ENCODE measurements at regions of chr5 and their contacts with region 1.

Region 1: DNA sequence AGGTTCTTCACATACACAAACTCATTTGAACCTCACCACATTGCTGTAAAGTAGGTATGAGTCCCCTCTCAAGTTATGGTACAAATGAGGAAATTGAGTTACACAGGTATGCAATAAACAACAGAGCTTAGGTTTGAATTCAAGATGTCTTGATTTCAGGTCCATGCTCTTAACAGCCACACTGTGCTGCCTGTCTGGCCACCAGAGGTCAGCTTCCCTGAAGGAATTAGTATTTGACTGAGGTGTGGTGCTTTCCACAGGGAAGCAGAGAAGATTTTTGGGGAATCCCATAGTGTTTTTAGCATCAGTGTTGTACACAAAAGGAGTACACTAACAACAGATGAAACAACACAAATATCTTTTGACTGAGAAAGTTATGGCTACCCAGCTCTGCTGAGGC is 94.4 kb upstream of the ITGA1 start:
- DNase-seq: peak; percentile 66
- H3K4me3 ChIP-seq: no peak overlapping the region
- H3K27ac ChIP-seq: peak overlapping the region in 1 of 4 donors; percentile 39
- H3K4me1 ChIP-seq: peaks cover 0 to 33% (median 15%) of the 10 kb centered on the region in 4 donors
- H3K27me3 ChIP-seq: no peaks in the 10 kb centered on the region
- CTCF ChIP-seq: peak in 3 of 4 experiments; percentile 42 to 65 (median 56)
- EP300 ChIP-seq: no peak
- POLR2A ChIP-seq: no peak

Region 2: GRCh38 chr5:52328220-52328806 is 365.0 kb before region 1 on chr5:
- intact Hi-C with region 1: no loop called
- DNase-seq: no peak
- H3K4me3 ChIP-seq: no peak overlapping the region
- H3K27ac ChIP-seq: no peak overlapping the region
- H3K4me1 ChIP-seq: no peaks in the 10 kb centered on the region
- H3K27me3 ChIP-seq: no peaks in the 10 kb centered on the region
- CTCF ChIP-seq: no peak
- EP300 ChIP-seq: no peak
- POLR2A ChIP-seq: no peak

Region 3: GRCh38 chr5:52915176-52915875 is 222.0 kb after region 1 on chr5:
- intact Hi-C with region 1: loop called (anchors 10 kb)
- DNase-seq: peak; percentile 70
- H3K4me3 ChIP-seq: peak overlapping the region in 1 of 4 donors; percentile 31
- H3K27ac ChIP-seq: peak overlapping the region; percentile 1 to 59 (median 34)
- H3K4me1 ChIP-seq: peaks cover 0 to 21% (median 9%) of the 10 kb centered on the region in 4 donors
- H3K27me3 ChIP-seq: no peaks in the 10 kb centered on the region
- CTCF ChIP-seq: peak; percentile 55 to 76 (median 68)
- EP300 ChIP-seq: no peak
- POLR2A ChIP-seq: no peak